ENCODE measurements at regions of chr21 and their contacts with region 1.

Region 1: DNA sequence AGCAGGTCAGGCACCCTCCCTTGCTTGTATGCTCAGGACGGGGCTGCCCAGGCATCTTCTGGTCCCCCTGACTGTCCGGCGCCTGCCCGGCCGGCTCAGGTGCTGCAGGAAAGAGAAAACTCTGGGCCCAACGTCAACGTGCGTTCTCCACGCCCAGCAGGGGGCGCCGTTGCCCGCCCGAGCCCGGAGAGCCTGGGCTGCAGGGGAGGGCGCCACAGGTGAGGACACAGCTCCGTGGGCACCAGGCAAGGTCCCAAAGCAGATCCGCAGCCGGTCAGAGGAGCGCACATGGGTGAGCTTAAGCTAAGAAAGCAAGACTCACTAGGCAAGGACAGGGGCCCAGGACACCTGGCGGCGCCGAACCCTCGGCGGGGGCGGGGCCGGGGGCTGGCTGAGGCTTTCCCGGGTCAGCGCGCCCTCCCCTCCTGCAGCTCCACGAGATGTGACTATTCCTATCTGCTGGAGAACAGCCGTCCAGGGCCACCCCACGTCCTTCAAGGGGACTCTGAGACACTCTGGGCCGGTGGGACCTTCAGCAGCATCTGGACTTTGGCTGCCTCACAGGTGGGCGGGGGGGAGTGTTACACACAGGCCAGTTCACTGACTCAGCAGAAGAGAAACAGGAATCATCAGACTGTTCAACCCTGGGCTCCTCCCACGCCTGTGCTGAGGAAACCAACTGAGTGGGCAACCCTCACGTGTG is 29.3 kb downstream of the KRTAP10-1 start:
- DNase-seq: peak; percentile 66
- H3K4me3 Mint-ChIP-seq: no peak overlapping the region
- H3K27ac Mint-ChIP-seq: no peak overlapping the region
- H3K4me1 Mint-ChIP-seq: no peaks in the 10 kb centered on the region
- H3K27me3 Mint-ChIP-seq: no peaks in the 10 kb centered on the region

Region 2: GRCh38 chr21:44531228-44532172 is 20.8 kb after region 1 on chr21:
- intact Hi-C with region 1: no loop called
- DNase-seq: no peak
- H3K4me3 Mint-ChIP-seq: no peak overlapping the region
- H3K27ac Mint-ChIP-seq: no peak overlapping the region
- H3K4me1 Mint-ChIP-seq: no peaks in the 10 kb centered on the region
- H3K27me3 Mint-ChIP-seq: no peaks in the 10 kb centered on the region

Region 3: DNA sequence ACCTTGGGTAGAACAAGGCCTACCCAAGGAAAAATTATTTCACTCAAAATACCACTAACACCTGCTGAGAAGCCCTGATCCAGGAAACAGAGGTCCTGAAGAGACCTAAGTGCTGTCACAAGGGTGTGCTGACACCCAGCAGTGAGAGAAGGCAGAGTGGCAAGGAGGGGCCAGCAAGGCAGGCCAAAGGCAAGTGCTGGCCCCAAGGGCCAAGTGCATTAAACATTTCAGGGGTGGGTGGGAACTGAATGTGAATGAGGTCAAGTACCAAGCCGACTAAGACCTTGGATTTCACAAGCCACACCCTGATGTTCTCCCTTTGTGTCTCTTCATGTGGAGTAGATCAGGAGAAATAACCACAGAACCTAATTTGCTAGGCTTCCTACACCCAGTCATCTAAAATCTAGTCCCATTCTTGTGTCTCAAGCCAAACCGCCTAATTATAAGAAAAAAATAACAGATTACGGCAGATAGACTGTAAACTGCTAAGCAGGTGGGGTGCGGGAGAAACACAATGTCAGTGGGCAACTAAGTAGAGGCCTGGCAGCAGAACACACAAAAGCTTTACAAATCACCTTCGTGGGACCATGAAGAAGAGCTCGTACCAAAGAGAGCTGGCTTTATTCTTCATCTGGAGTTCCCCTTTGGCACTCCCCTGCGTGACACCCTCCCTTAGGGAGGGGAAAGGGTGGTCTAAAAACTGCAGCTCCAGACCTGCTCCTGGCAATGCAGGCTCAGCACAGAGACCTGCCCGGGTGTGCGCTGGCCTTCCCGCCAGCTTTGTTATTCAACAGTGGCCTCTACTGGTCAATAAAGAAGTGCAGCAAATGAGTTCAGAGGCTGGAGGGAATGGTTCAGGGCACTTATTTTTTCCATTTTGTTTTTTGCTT is 282.3 kb after region 1 on chr21:
- intact Hi-C with region 1: loop called (anchors 1 kb)
- DNase-seq: peak; percentile 40
- H3K4me3 Mint-ChIP-seq: no peak overlapping the region
- H3K27ac Mint-ChIP-seq: no peak overlapping the region
- H3K4me1 Mint-ChIP-seq: peaks cover 39% of the 10 kb centered on the region
- H3K27me3 Mint-ChIP-seq: no peaks in the 10 kb centered on the region

Measured in activated T-helper 2 cell treated with anti-CD3 and anti-CD28 coated beads, Interferon-gamma antibody, Interleukin-2, Interleukin-4, amounts not matched to agents 10 μg/mL and 5 μg/mL and 100 μg/mL, durations not matched to agents 14 hours and 24 hours and 36 hours (primary cell).